RWPE1 (cell line): ENCODE measurements at regions of chr19 and their contacts with region 1.

Region 1: GRCh38 chr19:2236314-2237050 is at the starts of genes PLEKHJ1 and SF3A2:
- DNase-seq: peak; percentile 98
- H3K27ac ChIP-seq: peak within 1 kb of the TSS; percentile 95
- CTCF ChIP-seq: peak; percentile 99

Region 2: GRCh38 chr19:695352-695949 is 1541.0 kb before region 1 on chr19 and contains the start of gene PRSS57:
- CTCF ChIA-PET with region 1: no interaction called
- POLR2A ChIA-PET with region 1: no interaction called
- DNase-seq: no peak
- H3K27ac ChIP-seq: no peak within 1 kb of the TSS
- CTCF ChIP-seq: no peak

Region 3: GRCh38 chr19:2251106-2252054 is 14.9 kb after region 1 on chr19:
- CTCF ChIA-PET with region 1: no interaction called
- POLR2A ChIA-PET with region 1: interaction called, 11 read pairs
- DNase-seq: no peak
- H3K27ac ChIP-seq: no peak overlapping the region
- CTCF ChIP-seq: no peak